Caco-2 (cell line): ENCODE measurements at regions of chr10 and their contacts with region 1.

Region 1: DNA sequence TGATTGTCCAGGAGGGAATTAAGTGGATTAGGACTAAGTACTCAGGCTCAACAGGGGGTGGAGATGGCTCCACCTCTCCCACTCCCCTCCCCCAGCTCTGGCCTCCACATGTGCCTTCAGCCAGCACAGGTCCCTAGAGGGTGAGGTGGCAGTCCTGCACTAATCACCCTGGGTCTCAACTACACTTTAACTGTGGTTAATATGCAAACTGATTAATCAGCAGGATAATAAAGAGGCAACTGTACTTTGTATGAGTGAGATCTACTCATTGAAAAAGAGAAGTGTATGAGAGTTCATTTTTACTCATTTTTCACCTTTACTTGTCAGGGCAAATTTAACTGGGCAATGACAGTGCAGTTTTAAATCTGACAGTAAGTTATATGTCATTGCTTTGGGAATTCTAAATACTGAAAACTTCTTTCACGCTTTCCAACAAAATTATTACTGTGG is 223.8 kb upstream of the CCDC6 start:
- DNase-seq: peak; percentile 50 to 54
- H3K4me3 ChIP-seq: no peak overlapping the region
- H3K4me3 Mint-ChIP-seq: no peak overlapping the region
- H3K27ac Mint-ChIP-seq: no peak overlapping the region
- H3K4me1 ChIP-seq: peaks cover 6% of the 10 kb centered on the region; the same call in 1 of the 2 replicates
- H3K4me1 Mint-ChIP-seq: no peaks in the 10 kb centered on the region
- H3K27me3 ChIP-seq: no peaks in the 10 kb centered on the region
- H3K27me3 Mint-ChIP-seq: no peaks in the 10 kb centered on the region
- CTCF ChIP-seq: no peak

Region 2: DNA sequence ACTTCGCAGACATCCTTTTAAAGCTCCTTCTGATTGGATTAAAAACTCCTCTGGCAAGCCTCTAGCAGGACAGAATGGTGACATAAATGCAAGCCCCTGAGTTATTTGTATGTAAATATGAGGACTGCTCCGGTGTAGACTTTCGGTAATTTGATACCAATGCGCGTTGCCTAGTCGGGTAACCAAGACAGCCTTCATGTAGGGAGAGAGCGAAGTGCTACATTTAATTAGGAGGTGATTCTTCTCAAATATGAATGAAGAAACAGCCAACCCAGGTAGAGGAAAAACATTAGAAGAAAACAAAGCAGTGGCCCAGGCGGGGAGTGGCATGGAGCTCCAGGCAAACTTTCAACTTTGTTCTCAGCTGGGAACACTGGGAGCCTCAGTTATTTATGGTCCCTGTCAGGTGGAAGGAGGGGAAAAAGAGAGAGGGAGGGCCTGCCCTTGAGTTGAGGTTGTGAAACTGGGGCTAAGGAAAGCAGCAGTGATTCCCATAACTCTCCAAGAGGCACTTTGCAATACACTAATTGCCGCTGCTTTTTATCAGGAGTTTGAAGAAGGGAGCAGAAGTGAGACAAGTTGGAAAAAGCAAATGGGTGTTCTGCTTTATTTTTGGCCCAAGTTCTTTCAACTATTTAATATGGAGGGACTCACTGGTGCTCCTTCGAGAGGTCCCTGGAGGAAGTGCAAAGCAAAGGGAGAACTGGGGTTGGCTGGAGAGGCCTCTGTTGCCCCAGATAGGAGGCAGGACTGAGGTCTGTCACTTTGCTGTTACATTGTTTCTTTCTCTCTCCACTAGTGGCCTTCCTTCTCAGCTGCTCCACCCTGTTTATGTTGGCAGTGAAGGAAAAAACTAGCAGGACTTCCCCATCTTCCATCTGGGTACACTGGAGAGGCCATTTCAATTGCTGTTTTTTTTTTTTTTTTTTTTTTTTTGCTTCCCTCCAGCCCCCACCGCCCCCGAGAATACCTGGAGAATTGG is 10.8 kb after region 1 on chr10:
- CTCF ChIA-PET with region 1: no interaction called
- POLR2A ChIA-PET with region 1: interaction called, 4 read pairs
- intact Hi-C with region 1: loop called (anchors 1 kb)
- DNase-seq: peak; percentile 81 to 83
- H3K4me3 ChIP-seq: peak overlapping the region; percentile 38
- H3K4me3 Mint-ChIP-seq: no peak overlapping the region
- H3K27ac Mint-ChIP-seq: no peak overlapping the region
- H3K4me1 ChIP-seq: peaks cover 61% of the 10 kb centered on the region
- H3K4me1 Mint-ChIP-seq: peaks cover 13% of the 10 kb centered on the region
- H3K27me3 ChIP-seq: no peaks in the 10 kb centered on the region
- H3K27me3 Mint-ChIP-seq: no peaks in the 10 kb centered on the region
- CTCF ChIP-seq: peak in 1 of 2 experiments; percentile 0